Heart right ventricle (tissue), 16 donors: ENCODE measurements at regions of chr13 and their contacts with region 1.

Region 1: DNA sequence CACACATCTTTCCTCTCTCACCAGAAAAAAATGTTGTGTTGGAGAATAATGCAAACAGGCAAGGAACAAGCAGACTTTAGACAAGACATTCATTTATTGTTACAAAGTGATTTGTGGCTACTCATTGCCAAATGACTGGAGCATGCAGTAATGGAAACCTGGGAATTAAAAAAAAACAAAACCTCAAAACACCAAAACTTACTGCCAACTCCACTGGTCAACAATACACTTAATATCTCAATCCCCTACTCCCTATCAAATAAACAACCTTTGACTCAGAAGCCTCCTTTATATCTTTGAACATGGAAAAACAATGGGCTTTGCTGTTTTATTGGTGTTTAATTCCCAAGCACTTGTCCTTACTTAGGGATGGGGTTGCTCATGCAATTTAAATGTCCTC is 112.8 kb downstream of the POSTN start:
- DNase-seq: no peak
- ATAC-seq: peak in 2 of 8 donors; percentile 22 to 35
- H3K4me3 ChIP-seq: peak overlapping the region in 3 of 10 donors; percentile 6 to 15 (median 10)
- H3K27ac ChIP-seq: peak overlapping the region in 4 of 10 donors; percentile 1 to 23 (median 16)
- H3K4me1 ChIP-seq: peaks cover 0 to 25% (median 0%) of the 10 kb centered on the region in 9 donors
- H3K27me3 ChIP-seq: no peaks in the 10 kb centered on the region
- CTCF ChIP-seq: no peak

Region 2: GRCh38 chr13:37403776-37404528 is 81.8 kb before region 1 on chr13:
- intact Hi-C with region 1: no loop called
- DNase-seq: no peak
- ATAC-seq: no peak
- H3K4me3 ChIP-seq: no peak overlapping the region
- H3K27ac ChIP-seq: no peak overlapping the region
- H3K4me1 ChIP-seq: peaks cover 0 to 3% (median 0%) of the 10 kb centered on the region in 9 donors
- H3K27me3 ChIP-seq: no peaks in the 10 kb centered on the region
- CTCF ChIP-seq: no peak

Region 3: GRCh38 chr13:37539976-37540605 is 54.3 kb after region 1 on chr13:
- intact Hi-C with region 1: loop called in 1 of 10 experiments (anchors 5 kb)
- DNase-seq: no peak
- ATAC-seq: no peak
- H3K4me3 ChIP-seq: no peak overlapping the region
- H3K27ac ChIP-seq: no peak overlapping the region
- H3K4me1 ChIP-seq: no peaks in the 10 kb centered on the region
- H3K27me3 ChIP-seq: no peaks in the 10 kb centered on the region
- CTCF ChIP-seq: no peak